A673 (cell line): ENCODE measurements at regions of chr11 and their contacts with region 1.

Region 1: GRCh38 chr11:120172054-120172911 is 34.4 kb upstream of the TRIM29 start:
- DNase-seq: peak; percentile 73
- H3K4me3 ChIP-seq: no peak overlapping the region
- H3K27ac ChIP-seq: no peak overlapping the region
- H3K4me1 ChIP-seq: peaks cover 6% of the 10 kb centered on the region
- H3K27me3 ChIP-seq: peaks cover 25% of the 10 kb centered on the region
- CTCF ChIP-seq: peak; percentile 80

Region 2: DNA sequence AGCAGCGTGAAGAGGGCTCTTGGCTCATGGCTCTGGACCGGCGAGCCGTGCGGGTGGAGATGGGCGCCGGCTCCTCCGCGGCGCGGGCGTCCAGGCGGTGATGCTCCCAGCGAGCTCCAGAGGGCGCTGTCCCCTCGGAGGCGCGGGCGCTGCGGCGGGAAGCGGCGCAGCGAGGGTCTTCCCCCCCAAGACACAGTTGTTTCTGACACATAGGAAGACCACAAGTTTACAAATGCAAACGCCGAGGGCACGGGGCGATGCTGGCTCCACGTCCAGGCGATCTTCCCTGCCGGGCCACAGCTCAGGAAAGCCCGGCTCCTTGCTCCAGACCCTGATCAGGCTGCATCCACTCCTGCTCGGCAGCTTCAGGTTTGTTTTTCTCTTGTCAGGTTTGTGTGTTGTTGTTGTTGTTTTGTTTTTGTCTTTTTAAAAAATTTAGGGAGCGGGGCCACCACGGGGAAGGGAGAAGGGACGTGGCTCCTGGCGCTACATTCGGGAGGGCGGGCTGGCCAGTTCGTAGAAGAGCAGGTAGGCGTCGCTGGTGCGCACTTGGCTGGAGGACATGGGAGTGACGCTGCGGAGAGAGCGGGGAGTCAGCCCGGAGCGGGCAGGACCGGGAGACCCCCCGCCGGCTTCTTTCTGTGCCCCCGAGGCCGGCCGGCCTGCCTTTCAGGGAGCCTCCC is 815.8 kb before region 1 on chr11:
- CTCF ChIA-PET with region 1: no interaction called
- POLR2A ChIA-PET with region 1: no interaction called
- intact Hi-C with region 1: no loop called
- DNase-seq: peak; percentile 93
- H3K4me3 ChIP-seq: peak overlapping the region; percentile 64
- H3K27ac ChIP-seq: peak overlapping the region; percentile 79
- H3K4me1 ChIP-seq: peaks cover 9% of the 10 kb centered on the region
- H3K27me3 ChIP-seq: no peaks in the 10 kb centered on the region
- CTCF ChIP-seq: peak; percentile 95

Region 3: GRCh38 chr11:119666463-119667131 is 505.7 kb before region 1 on chr11:
- CTCF ChIA-PET with region 1: no interaction called
- POLR2A ChIA-PET with region 1: no interaction called
- intact Hi-C with region 1: loop called (anchors 5 kb)
- DNase-seq: peak; percentile 24
- H3K4me3 ChIP-seq: no peak overlapping the region
- H3K27ac ChIP-seq: no peak overlapping the region
- H3K4me1 ChIP-seq: peaks cover 3% of the 10 kb centered on the region
- H3K27me3 ChIP-seq: no peaks in the 10 kb centered on the region
- CTCF ChIP-seq: peak; percentile 88

Region 4: DNA sequence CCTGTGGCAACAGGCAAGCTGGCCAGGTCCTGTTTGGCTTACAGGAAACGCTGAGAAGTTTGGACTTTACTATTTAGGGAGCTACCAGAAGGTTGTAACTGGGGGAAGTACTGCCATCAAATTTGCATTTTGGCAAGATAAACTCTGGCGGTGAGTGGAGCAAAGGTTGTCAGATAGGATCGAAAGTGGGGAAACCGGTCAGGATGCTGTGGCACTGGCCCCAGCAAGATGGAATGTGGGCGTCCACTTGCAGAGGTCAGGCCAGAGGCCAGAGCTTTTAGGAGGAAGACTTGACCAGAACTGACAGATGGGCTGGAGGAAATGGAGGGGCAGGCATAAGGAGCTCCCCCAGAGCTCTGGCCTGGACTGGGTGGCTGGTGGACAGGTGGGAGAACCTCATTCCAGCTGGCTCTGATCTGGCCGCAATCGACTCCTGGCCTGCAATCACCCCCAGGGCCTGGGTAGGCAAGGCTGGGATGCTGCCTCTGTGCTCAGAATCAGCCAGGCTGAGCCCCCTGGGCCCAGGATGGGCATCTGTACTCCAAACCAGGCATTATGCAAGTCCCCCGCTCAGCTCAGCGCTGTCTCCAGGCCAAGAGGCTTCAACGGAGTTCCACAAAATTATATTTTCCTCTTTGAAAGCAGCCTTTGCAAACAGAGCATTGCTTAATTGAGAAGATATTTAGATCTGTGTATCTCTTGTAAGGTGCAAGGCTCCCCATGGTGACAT is 265.0 kb before region 1 on chr11:
- CTCF ChIA-PET with region 1: no interaction called
- POLR2A ChIA-PET with region 1: no interaction called
- intact Hi-C with region 1: no loop called
- DNase-seq: no peak
- H3K4me3 ChIP-seq: no peak overlapping the region
- H3K27ac ChIP-seq: no peak overlapping the region
- H3K4me1 ChIP-seq: peaks cover 4% of the 10 kb centered on the region
- H3K27me3 ChIP-seq: peaks cover 7% of the 10 kb centered on the region
- CTCF ChIP-seq: no peak

Region 5: DNA sequence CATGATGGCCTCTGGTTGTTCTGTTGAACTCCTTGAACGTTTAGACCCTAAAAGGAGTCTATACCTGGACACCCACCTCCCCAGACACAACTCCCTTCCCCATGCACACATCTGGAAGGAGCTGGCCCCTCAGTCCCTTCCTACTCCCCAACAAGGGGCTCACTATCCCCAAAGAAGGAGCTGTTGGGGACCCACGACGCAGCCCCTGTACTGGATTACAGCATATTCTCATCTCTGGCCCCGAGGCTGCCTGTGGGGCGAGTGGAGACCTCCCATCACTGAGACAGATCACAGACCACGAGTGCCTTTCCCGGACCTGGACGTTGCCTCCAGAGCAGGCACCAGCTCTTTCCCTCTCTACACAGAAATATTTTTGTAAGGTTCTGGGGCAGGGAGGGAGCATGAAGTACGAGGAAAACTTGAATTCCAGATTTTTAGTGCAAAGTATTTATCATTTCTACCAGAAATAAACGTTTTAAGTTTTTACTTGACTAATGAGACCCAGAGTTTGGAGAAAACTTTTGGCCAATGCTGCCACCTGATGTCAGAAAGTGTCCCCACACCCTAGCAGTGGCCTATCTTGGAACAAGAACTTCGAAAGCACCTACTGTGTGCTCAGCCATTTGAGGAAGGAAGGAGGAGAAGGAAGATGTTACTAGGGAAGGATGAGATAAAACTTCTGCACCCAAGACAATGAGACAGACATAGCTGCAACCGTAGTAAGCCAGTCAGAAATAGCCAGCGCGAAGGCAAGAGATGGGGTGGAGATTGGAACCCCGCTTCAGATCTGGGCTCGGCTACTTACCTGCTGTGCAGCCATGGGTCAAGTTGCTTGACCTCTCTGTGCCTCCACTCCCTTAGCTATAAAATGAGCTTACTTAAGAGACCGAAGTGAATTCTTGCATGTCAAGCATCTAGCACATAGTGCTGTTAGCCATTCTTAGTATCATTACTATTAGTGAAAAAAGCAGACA is 57.5 kb after region 1 on chr11:
- CTCF ChIA-PET with region 1: interaction called, 3 read pairs
- POLR2A ChIA-PET with region 1: no interaction called
- intact Hi-C with region 1: loop called (anchors 1 kb)
- DNase-seq: no peak
- H3K4me3 ChIP-seq: no peak overlapping the region
- H3K27ac ChIP-seq: no peak overlapping the region
- H3K4me1 ChIP-seq: peaks cover 6% of the 10 kb centered on the region
- H3K27me3 ChIP-seq: no peaks in the 10 kb centered on the region
- CTCF ChIP-seq: peak; percentile 73

Region 6: DNA sequence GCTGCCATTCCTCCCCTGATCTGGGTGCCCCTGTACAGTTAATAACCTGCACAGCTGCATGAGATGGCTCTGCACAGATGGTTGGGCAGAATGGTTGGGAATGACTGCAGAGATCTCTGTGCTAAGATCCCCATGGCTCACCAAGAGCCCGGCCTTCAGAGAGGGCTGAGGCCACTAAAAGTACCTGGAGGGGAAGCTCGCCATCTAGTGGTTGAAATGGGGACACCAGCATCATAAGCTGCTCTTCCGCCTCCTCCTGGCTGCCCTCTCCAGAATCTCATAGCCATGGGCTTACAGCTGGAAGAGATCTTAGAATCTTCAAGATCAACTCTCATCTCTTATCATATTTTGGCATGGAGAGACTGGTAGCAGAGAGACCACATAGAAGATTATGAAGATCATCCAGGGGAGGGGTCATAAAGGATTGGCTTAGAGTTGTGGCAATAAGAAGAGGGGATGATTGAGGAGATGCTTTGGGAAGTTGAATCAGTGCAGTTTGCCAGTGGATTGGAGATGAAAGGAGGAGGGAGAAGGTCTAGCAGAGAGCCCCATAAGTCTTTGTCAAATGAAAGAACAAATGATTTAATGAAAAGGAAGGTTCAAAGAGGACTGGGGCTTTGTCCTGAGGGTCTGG is 130.8 kb after region 1 on chr11:
- CTCF ChIA-PET with region 1: interaction called, 3 read pairs
- POLR2A ChIA-PET with region 1: no interaction called
- intact Hi-C with region 1: loop called (anchors 1 kb)
- DNase-seq: peak; percentile 82
- H3K4me3 ChIP-seq: no peak overlapping the region
- H3K27ac ChIP-seq: no peak overlapping the region
- H3K4me1 ChIP-seq: no peaks in the 10 kb centered on the region
- H3K27me3 ChIP-seq: no peaks in the 10 kb centered on the region
- CTCF ChIP-seq: peak; percentile 96

Region 7: DNA sequence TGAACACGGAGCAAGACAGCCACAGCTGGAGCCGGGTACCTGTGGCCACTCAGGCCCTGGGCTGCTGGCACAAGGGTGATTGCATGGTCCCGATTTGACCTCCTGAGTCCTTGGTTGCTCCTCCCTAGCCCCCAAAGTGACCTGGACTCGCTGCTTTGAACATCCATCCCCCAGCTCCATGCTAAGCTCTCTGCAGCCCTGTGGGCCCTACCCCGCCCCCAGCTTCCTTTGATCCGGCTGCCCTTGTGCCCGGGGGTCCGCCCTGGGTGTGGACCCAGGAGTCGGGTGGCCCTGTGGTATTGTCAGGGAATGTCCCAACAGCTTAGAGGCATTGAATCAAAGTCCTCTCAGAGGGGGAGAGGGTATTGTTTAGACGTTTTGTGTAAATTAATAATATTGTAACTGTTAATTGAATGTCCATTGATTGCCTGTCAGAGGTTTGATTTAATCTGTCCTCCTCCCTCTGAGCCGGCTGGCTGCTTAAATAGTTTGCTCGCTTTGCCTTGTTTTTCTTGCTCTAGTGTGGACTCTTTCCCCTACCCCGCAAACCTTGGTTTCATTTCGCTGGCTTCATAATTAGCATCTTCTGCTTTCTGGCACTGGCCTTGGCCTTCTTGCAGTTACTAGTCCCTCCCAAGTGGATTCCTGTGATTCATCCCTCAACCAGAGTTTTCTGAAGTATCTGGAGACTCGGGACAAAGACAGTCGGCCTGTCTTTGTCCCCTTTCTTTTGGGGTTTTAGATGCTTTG is 360.0 kb after region 1 on chr11:
- CTCF ChIA-PET with region 1: no interaction called
- POLR2A ChIA-PET with region 1: no interaction called
- intact Hi-C with region 1: no loop called
- DNase-seq: no peak
- H3K4me3 ChIP-seq: no peak overlapping the region
- H3K27ac ChIP-seq: no peak overlapping the region
- H3K4me1 ChIP-seq: peaks cover 3% of the 10 kb centered on the region
- H3K27me3 ChIP-seq: peaks cover 10% of the 10 kb centered on the region
- CTCF ChIP-seq: no peak